ENCODE measurements at regions of chr1 and their contacts with region 1.

Region 1: DNA sequence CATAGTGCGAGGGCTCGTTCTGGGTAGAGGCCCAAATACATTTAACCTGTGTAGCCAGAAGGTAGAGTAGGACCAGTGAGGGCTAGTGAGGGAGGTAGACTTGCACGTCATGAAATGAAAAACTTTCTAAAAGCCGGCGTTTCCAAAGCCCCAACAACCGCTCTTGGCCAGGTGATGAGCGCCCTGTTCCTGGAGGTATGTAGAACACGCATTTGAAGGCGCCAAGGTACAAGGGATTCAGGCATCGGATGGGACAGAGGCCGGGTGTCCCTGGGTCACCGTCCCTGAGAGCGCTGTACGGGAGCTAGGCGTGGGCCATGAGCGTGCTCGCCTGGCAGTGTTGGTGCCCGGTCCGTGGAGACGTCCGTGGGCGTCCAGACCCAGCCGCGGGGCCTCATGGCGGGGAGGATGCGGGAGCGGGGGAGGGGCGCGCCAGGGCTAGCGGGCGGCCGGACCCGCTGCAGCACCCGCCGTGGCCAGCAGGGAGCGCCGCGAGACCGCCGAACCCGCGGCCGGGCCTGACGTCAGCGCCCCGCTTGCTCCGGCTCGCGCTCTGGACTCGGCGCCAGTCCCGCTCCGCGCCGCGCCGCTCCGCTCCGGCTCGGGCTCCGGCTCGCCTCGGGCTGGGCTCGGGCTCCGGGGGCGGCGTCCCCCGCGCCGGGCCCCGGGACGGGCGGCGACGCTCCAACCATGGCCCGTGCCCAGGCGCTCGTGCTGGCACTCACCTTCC is at the start of gene PTPRU:
- H3K4me3 Mint-ChIP-seq: peak within 1 kb of the TSS; percentile 79
- H3K27ac Mint-ChIP-seq: peak within 1 kb of the TSS; percentile 6
- H3K4me1 Mint-ChIP-seq: peaks cover 23% of the 10 kb centered on the region
- H3K27me3 Mint-ChIP-seq: peaks cover 62% of the 10 kb centered on the region

Region 2: DNA sequence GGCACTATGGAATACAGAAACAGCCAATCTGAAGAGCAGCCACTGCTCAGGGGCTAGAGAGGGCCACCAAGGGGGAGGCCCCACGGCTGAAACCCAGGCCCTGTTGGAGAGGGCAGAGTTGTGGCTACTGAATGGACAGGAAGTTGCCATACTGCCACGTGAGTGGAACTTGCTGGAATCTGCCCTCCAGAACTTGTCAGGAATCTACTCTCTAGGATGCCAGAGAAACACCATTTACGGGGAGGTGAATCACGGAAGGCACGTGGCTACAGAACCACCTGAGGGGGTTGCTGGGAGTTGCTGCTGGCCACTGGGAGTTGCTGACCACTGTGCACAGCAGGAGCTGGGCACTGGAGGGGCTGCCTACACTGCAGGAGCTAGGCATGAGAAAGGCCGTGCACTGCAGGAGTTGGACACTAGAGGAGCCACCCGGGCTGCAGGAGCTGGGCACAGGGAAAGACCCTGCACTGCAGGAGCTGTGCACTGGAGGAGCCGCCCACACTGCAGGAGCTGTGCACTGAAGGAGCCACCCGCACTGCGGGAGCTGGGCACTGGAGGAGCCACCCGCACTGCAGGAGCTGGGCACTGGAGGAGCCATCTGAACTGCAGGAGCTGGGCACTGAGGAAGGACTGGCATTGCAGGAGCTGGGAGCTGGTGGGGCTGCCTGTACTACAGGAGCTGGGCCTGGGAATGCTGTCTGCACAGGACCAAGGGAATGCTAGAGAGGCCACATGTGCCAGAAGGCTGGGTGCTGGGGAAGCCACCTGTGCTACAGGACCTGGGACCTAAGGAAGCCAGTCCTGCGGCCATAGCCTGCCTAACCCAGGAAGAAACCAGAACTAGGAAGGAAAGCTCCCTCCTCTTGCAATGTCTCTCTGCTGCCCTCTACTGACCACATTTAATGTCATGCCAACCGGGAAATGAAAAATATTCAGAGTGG is 1143.8 kb after region 1 on chr1:
- intact Hi-C with region 1: loop called (anchors 5 kb)
- H3K4me3 Mint-ChIP-seq: no peak overlapping the region
- H3K27ac Mint-ChIP-seq: no peak overlapping the region
- H3K4me1 Mint-ChIP-seq: peaks cover 9% of the 10 kb centered on the region
- H3K27me3 Mint-ChIP-seq: peaks cover 12% of the 10 kb centered on the region

Measured in dendritic cell treated with granulocyte-macrophage colony-stimulating factor and Interleukin-4, amounts not matched to agents 40 ng/mL and 50 ng/mL, for 4 days (primary cell).